GM12878 (cell line): ENCODE measurements at regions of chr7 and their contacts with region 1.

Region 1: GRCh38 chr7:102279537-102280400 is 6.9 kb upstream of the SH2B2 start:
- DNase-seq: no peak
- ATAC-seq: peak; percentile 95
- H3K4me3 ChIP-seq: peak overlapping the region; percentile 37; the same call in 1 of the 2 replicates
- H3K27ac ChIP-seq: peak overlapping the region; percentile 78
- H3K4me1 ChIP-seq: peaks cover 33% of the 10 kb centered on the region
- H3K27me3 ChIP-seq: no peaks in the 10 kb centered on the region
- CTCF ChIP-seq: peak; percentile 87 to 96 (median 92)
- EP300 ChIP-seq: no peak
- POLR2A ChIP-seq: no peak
- RAD21 ChIP-seq: peak; percentile 94

Region 2: GRCh38 chr7:102390697-102391484 is 111.1 kb after region 1 on chr7:
- CTCF ChIA-PET with region 1: interaction called, 205 read pairs
- POLR2A ChIA-PET with region 1: interaction called, 4 read pairs
- RAD21 ChIA-PET with region 1: interaction called, 79 read pairs
- SMC1A ChIA-PET with region 1: interaction called, 122 read pairs
- in situ Hi-C with region 1: loop called (anchors 5 kb)
- intact Hi-C with region 1: loop called (anchors 1 kb)
- DNase-seq: no peak
- ATAC-seq: peak; percentile 92
- H3K4me3 ChIP-seq: no peak overlapping the region
- H3K27ac ChIP-seq: no peak overlapping the region
- H3K4me1 ChIP-seq: peaks cover 16% of the 10 kb centered on the region
- H3K27me3 ChIP-seq: no peaks in the 10 kb centered on the region
- CTCF ChIP-seq: peak; percentile 89 to 93 (median 91)
- EP300 ChIP-seq: no peak
- POLR2A ChIP-seq: no peak; the same call in 1 of the 2 replicates
- RAD21 ChIP-seq: peak; percentile 91

Region 3: GRCh38 chr7:102396027-102397019 is 116.6 kb after region 1 on chr7 and contains the start of gene PRKRIP1:
- CTCF ChIA-PET with region 1: interaction called, 205 read pairs
- POLR2A ChIA-PET with region 1: interaction called, 4 read pairs
- RAD21 ChIA-PET with region 1: interaction called, 79 read pairs
- SMC1A ChIA-PET with region 1: interaction called, 122 read pairs
- in situ Hi-C with region 1: loop called (anchors 5 kb)
- intact Hi-C with region 1: loop called (anchors 1 kb)
- DNase-seq: peak; percentile 96
- ATAC-seq: peak; percentile 99
- H3K4me3 ChIP-seq: peak within 1 kb of the TSS; percentile 97
- H3K27ac ChIP-seq: peak within 1 kb of the TSS; percentile 88
- H3K4me1 ChIP-seq: peaks cover 10% of the 10 kb centered on the region
- H3K27me3 ChIP-seq: no peaks in the 10 kb centered on the region
- CTCF ChIP-seq: no peak
- EP300 ChIP-seq: peak; percentile 17 to 62; a peak in 1 of 4 replicates
- POLR2A ChIP-seq: peak; percentile 86
- RAD21 ChIP-seq: no peak
- polyA plus RNA-seq, gene PRKRIP1: 17.0 to 18.3 TPM

Region 4: GRCh38 chr7:102464577-102465280 is 185.0 kb after region 1 on chr7 and contains the starts of genes ALKBH4 and LRWD1:
- CTCF ChIA-PET with region 1: interaction called, 12 read pairs
- POLR2A ChIA-PET with region 1: no interaction called
- RAD21 ChIA-PET with region 1: interaction called, 3 read pairs
- SMC1A ChIA-PET with region 1: no interaction called
- in situ Hi-C with region 1: no loop called
- intact Hi-C with region 1: no loop called
- DNase-seq: no peak
- ATAC-seq: peak; percentile 94
- H3K4me3 ChIP-seq: peak within 1 kb of the TSS; percentile 93
- H3K27ac ChIP-seq: peak within 1 kb of the TSS; percentile 89
- H3K4me1 ChIP-seq: peaks cover 15% of the 10 kb centered on the region
- H3K27me3 ChIP-seq: no peaks in the 10 kb centered on the region
- CTCF ChIP-seq: peak in 2 of 3 experiments; percentile 12 to 38; a peak in 4 of 6 replicates
- EP300 ChIP-seq: peak in 1 of 2 experiments; percentile 11; a peak in 1 of 4 replicates
- POLR2A ChIP-seq: peak; percentile 95
- RAD21 ChIP-seq: 0 out of 2 replicates have a peak, but pooled peaks have one; percentile 11
- polyA plus RNA-seq, gene ALKBH4: 4.1 to 9.1 TPM
- polyA plus RNA-seq, gene LRWD1: 0.40 to 2.0 TPM